ENCODE measurements at regions of chr9 and their contacts with region 1.

Region 1: DNA sequence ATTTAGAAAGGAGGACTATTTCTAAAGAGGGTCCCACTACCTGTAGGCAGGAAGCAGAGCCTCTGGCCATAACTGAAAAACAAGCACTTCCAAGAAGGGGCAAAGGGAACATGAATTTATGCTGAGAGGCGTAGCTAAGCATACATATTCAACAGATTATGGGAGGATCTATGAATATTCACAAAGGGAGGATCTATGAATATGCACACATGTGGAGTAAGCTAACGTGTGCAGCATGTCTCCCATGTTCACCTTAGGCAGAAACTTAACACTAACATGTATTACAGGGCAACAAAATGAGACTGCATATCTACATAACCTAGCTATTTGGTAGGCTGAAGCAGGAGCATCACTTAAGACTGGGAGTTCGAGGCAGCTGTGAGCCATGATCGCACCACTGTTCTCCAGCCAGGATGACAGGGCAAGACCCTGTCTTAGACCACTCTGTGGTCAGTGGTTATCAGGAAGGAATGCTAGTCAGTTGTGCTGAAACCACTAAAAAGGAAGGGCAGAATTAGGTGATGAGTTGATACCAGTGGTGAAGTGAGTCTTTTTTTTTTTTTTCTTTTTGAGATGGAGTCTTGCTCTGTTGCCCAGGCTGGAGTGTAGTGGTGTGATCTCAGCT is 20.8 kb downstream of the FXN start:
- DNase-seq: no peak
- H3K4me3 Mint-ChIP-seq: no peak overlapping the region
- H3K27ac Mint-ChIP-seq: no peak overlapping the region
- H3K4me1 Mint-ChIP-seq: no peaks in the 10 kb centered on the region
- H3K27me3 Mint-ChIP-seq: no peaks in the 10 kb centered on the region

Region 2: DNA sequence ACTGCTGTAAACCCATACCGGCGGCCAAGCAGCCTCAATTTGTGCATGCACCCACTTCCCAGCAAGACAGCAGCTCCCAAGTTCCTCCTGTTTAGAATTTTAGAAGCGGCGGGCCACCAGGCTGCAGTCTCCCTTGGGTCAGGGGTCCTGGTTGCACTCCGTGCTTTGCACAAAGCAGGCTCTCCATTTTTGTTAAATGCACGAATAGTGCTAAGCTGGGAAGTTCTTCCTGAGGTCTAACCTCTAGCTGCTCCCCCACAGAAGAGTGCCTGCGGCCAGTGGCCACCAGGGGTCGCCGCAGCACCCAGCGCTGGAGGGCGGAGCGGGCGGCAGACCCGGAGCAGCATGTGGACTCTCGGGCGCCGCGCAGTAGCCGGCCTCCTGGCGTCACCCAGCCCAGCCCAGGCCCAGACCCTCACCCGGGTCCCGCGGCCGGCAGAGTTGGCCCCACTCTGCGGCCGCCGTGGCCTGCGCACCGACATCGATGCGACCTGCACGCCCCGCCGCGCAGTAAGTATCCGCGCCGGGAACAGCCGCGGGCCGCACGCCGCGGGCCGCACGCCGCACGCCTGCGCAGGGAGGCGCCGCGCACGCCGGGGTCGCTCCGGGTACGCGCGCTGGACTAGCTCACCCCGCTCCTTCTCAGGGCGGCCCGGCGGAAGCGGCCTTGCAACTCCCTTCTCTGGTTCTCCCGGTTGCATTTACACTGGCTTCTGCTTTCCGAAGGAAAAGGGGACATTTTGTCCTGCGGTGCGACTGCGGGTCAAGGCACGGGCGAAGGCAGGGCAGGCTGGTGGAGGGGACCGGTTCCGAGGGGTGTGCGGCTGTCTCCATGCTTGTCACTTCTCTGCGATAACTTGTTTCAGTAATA is 20.6 kb before region 1 on chr9 and contains the start of gene FXN:
- CTCF ChIA-PET with region 1: interaction called, 12 read pairs
- POLR2A ChIA-PET with region 1: no interaction called
- intact Hi-C with region 1: no loop called
- DNase-seq: peak; percentile 89
- H3K4me3 Mint-ChIP-seq: peak within 1 kb of the TSS; percentile 97
- H3K27ac Mint-ChIP-seq: peak within 1 kb of the TSS; percentile 92
- H3K4me1 Mint-ChIP-seq: peaks cover 21% of the 10 kb centered on the region
- H3K27me3 Mint-ChIP-seq: no peaks in the 10 kb centered on the region
- total RNA-seq, gene FXN: 14.1 to 15.2 TPM

Region 3: DNA sequence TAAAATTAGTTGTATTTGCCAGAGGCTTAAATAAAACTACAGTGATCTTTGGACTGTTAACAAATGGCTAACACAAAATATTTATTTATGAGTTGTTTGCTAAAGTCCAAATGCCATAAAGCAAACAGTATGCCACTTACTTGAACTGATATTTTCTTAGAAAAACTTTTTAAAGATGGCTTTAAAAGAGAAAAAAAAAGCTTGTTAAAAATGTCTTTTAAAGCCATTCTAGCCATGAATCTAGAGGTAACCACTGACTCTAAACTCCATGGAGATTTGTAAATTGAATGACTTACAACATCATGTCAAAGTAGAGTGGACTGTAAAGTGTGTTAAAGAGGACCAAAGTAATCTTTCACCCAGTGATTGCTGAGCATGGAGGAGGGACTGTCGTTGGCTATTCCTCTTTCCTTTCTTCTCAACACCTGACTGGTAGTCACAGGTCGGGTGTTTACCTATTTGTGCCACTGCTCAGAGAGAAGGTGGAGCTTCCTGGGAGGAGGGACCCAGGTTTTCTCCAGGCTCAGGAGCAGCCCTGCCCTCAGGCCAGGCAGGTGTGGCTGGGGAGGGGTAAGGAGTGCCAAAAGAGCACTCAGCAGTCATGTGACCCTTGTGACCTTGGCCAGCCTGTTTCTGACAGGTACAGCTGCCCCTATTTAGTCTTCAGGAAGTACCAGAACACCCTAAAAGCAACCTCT is 48.7 kb after region 1 on chr9:
- CTCF ChIA-PET with region 1: no interaction called
- POLR2A ChIA-PET with region 1: no interaction called
- intact Hi-C with region 1: no loop called
- DNase-seq: no peak
- H3K4me3 Mint-ChIP-seq: no peak overlapping the region
- H3K27ac Mint-ChIP-seq: no peak overlapping the region
- H3K4me1 Mint-ChIP-seq: no peaks in the 10 kb centered on the region
- H3K27me3 Mint-ChIP-seq: no peaks in the 10 kb centered on the region

Region 4: DNA sequence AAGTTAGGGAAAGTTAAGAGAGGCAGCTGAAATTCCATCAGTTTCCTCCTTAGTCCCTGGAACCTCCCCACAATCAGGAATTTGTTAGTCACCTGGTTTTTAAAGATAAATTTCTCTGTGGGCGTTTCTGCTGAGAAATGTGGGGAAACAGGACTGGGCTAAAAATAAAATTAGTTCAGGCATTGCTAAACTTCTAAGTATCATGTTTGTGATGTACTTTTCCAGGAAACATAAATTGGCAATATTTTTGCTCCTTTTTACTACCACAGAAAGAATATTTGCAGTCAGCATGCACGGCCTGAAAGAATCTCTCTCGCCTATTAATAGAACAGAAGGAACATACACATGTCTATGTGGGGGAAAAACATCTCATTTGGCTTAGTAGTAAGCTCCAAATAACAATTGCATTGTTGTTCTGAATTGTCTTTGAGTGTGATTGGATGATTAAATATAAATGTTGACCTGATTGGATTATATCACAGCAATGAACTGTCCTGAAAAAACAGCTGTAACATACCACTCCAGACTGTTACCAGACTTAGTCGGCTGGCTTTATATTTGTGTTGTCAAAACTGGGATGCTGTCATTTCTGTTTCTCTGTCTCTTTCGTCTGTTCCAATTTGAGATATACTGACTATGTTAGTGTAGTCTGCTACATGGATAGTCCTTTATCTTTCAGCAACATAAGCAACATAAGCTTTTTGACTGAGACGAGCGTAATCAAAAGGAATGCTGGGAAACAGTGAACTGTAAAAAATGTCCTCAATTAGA is 130.7 kb after region 1 on chr9:
- CTCF ChIA-PET with region 1: interaction called, 179 read pairs
- POLR2A ChIA-PET with region 1: no interaction called
- intact Hi-C with region 1: no loop called
- DNase-seq: no peak
- H3K4me3 Mint-ChIP-seq: no peak overlapping the region
- H3K27ac Mint-ChIP-seq: no peak overlapping the region
- H3K4me1 Mint-ChIP-seq: peaks cover 27% of the 10 kb centered on the region
- H3K27me3 Mint-ChIP-seq: no peaks in the 10 kb centered on the region

Region 5: DNA sequence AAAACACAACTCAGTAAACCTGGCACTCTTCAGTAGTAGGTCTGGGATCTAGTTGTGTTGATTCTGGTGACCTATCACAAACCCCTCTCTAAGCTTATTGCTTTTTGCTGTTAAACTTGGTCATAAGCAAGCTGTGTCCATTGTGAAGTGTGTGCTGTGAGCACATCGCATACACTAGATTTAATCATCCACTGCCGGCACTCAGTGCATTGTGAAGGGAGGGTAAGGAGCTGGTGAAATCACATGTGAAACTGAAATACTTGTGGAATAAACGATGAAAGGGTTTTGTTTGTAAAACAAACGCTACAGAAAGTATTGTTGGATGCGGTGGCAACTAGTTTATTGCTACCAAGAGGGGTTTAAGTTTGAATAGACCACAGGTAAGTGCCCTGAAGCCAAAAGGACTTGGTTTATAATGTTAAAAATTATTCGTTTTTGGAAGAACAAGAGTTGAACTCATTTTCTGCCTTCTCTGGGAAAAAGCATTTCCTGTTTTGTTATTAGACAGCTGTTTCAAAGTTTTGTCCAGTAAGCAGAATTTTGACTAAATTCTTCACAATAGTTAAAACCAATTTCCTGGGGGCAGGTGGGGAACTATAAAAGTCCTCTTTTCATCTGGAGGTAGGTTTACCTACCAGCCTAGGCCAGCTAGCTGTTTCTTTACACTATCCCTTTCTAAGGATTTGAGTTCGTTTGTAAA is 142.4 kb after region 1 on chr9:
- CTCF ChIA-PET with region 1: interaction called, 179 read pairs
- POLR2A ChIA-PET with region 1: interaction called, 3 read pairs
- intact Hi-C with region 1: loop called (anchors 1 kb)
- DNase-seq: no peak
- H3K4me3 Mint-ChIP-seq: no peak overlapping the region
- H3K27ac Mint-ChIP-seq: no peak overlapping the region
- H3K4me1 Mint-ChIP-seq: peaks cover 11% of the 10 kb centered on the region
- H3K27me3 Mint-ChIP-seq: no peaks in the 10 kb centered on the region

Region 6: DNA sequence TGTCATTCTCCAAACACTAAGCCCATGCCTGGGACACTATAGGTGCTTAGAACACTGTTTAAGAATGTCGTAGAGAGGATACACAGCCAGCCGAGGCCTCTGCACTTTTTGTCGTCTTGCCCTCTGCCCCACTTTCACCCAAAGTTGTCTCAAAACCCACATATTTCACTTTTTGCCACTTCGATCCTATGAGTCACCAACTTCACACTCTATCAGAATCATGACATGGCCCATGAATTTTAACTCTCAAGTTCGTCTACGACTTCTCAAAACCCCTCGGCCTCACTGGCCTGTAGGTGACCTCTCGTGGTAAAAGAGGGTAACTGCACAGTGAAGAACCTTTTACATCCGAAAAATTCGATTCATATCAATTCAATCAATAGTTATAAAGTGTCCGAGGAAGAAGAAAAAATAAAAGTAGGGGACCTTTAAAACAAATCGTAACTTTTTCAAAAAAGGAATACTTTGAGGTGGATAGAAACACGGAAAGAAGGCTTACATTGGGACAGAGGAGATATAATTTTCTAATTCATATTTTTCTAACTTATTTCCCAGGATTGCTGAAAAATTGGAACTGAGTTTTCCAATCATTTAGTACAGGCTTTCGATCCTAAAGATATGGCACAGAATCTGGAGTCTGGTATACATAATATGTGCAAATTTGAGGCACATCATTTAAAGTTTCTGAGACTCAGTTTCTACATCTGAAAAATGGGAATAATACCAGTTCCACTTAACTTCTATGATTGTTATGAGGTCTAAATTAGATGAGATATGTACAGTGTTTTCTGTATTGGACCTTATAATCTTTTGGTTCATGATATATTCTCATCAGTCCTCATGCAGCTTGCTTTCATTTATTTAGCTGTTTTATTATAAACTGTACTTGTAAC is 493.3 kb after region 1 on chr9:
- CTCF ChIA-PET with region 1: no interaction called
- POLR2A ChIA-PET with region 1: no interaction called
- intact Hi-C with region 1: loop called (anchors 5 kb)
- DNase-seq: peak; percentile 22
- H3K4me3 Mint-ChIP-seq: no peak overlapping the region
- H3K27ac Mint-ChIP-seq: no peak overlapping the region
- H3K4me1 Mint-ChIP-seq: peaks cover 4% of the 10 kb centered on the region
- H3K27me3 Mint-ChIP-seq: peaks cover 14% of the 10 kb centered on the region